AG04449 (cell line): ENCODE measurements at regions of chr7 and their contacts with region 1.

Region 1: GRCh38 chr7:127347567-127348246 is 44.8 kb downstream of the ZNF800 start:
- DNase-seq: no peak
- H3K4me3 ChIP-seq: peak overlapping the region; percentile 55
- CTCF ChIP-seq: peak; percentile 50

Region 2: GRCh38 chr7:127322351-127322750 is 25.4 kb before region 1 on chr7:
- CTCF ChIA-PET with region 1: no interaction called
- POLR2A ChIA-PET with region 1: no interaction called
- DNase-seq: no peak
- H3K4me3 ChIP-seq: no peak overlapping the region
- CTCF ChIP-seq: no peak

Region 3: DNA sequence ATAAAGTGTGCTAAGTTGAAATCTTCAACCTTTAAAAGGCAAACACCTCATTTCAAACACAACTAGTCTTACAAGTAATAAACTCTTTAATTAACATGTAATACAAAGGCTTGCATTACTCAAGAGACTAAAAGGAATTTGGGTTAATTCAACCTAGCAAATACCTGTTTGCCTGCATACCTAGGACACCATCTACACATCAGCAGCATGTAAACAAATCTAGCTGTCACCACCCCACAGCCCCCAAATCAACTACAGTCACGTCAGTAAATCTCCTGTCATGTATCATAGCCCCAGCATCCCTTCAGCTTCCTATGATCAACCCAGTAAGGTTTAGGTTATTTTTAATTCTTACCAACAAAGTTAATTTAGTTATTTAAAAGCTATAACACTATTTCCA is 11.3 kb after region 1 on chr7:
- CTCF ChIA-PET with region 1: interaction called, 15 read pairs
- POLR2A ChIA-PET with region 1: no interaction called
- DNase-seq: no peak
- H3K4me3 ChIP-seq: no peak overlapping the region
- CTCF ChIP-seq: no peak

Region 4: DNA sequence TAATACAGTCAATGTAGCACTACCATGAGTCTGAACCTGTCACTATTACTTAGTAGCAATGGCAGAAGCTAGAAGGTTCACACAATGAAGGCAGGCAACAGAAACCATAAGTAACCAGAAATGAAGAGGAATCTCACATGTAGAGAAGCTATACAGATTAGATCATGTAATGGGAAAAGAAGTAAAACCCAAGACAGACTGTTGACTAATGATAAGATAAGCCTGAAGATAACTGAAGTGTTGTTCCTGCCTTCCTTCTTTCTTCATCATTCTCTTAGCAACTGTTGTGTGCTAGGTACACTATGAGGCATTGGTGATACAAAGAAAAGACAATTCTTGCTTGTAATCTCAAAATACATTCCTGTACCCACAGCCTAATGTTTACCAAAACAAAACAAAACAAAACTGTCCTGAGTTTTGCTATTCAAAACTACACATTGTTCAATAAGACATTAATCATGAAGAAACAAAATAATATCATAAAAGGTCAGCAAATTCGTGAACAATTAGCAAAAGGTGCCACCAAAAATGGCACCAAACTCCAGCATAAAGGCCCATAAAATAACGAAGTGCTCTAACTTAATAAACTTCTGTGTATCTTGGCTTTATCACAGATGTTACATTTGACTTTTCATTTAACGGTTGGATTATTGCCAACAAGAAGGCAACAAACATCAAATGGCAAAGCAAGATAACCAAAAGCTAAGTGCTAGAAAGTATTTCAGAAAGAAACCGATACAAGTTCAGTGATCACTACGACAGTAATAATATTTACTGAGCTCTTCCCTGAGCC is 17.7 kb after region 1 on chr7:
- CTCF ChIA-PET with region 1: interaction called, 12 read pairs
- POLR2A ChIA-PET with region 1: no interaction called
- DNase-seq: no peak
- H3K4me3 ChIP-seq: no peak overlapping the region
- CTCF ChIP-seq: no peak

Region 5: DNA sequence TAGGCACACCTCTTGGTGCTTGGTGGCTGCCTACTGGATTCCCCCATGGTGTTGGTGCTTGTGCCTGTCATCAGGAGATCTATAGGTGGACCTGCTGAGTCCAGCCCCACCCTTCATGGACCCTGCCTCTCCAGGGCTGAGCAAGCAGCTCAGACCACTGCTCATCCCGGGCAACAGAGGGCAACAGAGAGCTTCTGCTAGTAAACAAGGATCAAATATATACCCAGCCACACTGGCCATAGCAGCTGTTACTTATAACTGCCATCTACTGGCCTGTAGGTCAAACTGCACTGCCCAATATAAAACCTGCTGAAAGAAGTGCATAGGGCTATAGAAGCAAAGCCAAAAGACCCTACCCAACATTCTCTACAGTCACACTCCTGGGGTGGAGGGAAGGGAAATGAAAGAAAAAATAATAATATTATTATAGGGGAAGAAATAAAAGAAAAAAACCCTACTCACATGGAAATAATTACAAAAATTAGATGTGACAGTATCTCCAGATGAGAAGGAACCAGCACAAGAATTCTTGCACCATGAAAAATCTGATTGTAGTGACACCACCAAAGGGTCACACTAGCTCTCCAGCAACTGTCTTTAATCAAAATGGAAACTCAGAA is 99.7 kb after region 1 on chr7:
- CTCF ChIA-PET with region 1: interaction called, 10 read pairs
- POLR2A ChIA-PET with region 1: no interaction called
- DNase-seq: no peak
- H3K4me3 ChIP-seq: no peak overlapping the region
- CTCF ChIP-seq: peak; percentile 32

Region 6: DNA sequence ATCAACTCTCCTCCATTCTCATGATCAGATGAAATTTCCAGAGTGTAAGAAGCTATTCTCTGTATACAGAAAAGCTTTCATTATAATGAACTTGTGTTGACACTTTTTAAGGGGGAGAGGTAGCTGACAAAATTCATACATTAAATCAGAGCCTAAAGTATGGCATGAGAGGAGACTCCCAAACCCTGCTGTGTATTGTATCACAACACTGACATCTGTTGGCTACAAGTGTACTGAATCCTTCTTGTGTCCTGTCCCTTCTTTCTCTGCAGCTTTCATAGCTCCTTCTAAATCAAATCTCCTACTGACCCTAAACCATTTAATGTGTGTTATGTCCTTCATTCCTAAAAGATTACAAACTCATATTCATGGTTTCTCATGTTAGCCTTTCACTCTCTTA is 166.8 kb after region 1 on chr7:
- CTCF ChIA-PET with region 1: interaction called, 20 read pairs
- POLR2A ChIA-PET with region 1: no interaction called
- DNase-seq: peak; percentile 16
- H3K4me3 ChIP-seq: no peak overlapping the region
- CTCF ChIP-seq: peak; percentile 46

Region 7: DNA sequence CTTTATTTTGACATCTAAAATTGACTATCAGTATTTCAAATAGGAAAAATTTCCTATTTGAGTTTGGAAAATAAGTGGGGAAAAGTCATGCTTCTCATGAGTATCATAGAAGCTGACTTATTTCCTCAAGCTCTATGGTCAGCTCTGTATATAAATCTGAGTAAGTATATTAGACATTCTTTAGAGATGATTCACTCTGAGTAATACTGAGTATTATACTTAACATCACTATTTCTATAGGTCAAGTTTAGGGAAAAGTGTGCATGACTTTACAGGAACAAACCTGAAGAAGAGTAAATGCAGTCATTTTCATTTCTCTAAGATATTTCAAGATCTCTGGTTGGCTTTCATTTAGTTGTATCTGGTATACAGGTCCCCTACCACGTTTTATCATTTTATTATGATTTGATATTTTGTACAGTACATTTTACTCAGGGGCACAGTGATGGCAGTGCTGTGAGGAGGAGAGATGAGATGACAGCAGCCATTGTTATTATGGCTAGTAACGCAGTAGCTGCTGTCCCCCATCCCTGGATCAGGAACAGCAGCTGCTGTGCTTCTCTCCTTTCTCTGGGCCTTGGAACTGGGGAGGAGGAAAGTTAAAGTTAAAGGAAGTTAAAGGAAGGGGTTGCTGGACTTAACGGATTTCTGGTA is 319.4 kb after region 1 on chr7:
- CTCF ChIA-PET with region 1: no interaction called
- POLR2A ChIA-PET with region 1: no interaction called
- DNase-seq: peak; percentile 19
- H3K4me3 ChIP-seq: no peak overlapping the region
- CTCF ChIP-seq: no peak